PC-3 (cell line): ENCODE measurements at regions of chr5 and their contacts with region 1.

Region 1: DNA sequence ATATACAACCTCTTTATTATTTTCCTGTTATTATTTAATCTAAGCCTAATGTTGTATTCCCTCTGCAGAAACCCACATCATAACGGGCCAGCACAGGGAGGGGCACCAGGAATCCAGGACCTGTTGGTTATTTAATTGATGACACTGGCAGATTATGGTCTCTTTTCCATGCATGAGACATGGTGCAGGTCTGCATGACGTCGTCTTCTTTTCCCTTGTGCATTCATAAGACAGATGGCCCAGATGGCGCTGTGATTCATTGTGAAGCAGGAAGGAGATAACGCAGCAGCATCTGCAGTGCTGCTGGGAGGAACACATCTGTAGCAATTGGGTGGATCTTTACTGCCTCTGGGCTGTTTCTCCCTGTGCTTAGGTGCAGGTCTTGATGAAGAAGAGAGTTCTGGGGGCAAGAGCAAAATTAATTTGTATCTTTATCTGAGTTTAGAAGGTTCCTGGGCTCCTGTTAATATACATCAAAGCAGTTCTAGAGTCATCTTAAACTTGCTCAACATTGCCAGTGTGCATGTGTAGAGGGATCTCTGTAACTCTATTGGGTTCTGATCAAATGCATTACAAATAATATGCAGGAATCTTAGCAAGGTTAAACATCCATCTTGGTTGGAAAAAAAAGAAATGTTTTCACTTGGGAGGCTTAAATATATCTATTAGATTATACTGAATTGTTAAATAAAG is 176.1 kb downstream of the PCSK1 start:
- DNase-seq: peak; percentile 41
- ATAC-seq: no peak
- H3K4me3 ChIP-seq: no peak overlapping the region
- H3K27ac ChIP-seq: no peak overlapping the region
- H3K4me1 ChIP-seq: peaks cover 77% of the 10 kb centered on the region
- H3K27me3 ChIP-seq: no peaks in the 10 kb centered on the region
- CTCF ChIP-seq: 0 out of 2 replicates have a peak, but pooled peaks have one; percentile 13

Region 2: GRCh38 chr5:95858661-95859326 is 398.1 kb before region 1 on chr5:
- CTCF ChIA-PET with region 1: interaction called, 3 read pairs
- POLR2A ChIA-PET with region 1: no interaction called
- intact Hi-C with region 1: loop called (anchors 5 kb)
- DNase-seq: peak; percentile 93
- ATAC-seq: peak; percentile 68
- H3K4me3 ChIP-seq: peak overlapping the region; percentile 56
- H3K27ac ChIP-seq: peak overlapping the region; percentile 99
- H3K4me1 ChIP-seq: peaks cover 49% of the 10 kb centered on the region
- H3K27me3 ChIP-seq: no peaks in the 10 kb centered on the region
- CTCF ChIP-seq: peak; percentile 91

Region 3: DNA sequence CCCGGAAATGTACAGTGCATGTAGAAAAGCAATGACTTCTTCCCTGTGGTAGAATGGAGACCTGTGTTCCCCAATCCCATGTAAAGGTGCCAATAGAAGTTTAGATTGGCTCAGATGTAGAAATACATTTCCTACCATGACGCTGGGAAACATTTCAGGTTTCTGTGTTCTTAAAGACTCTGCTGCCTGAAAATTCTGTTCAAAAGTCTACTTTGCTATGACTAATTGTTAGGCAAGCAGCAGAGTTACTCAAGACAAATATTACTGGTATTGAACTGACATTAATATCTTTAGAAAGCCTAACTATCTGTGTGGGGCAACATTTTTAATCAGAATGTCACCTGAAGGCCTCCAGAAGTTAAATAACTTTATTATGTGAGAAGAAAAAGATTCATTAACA is 219.8 kb before region 1 on chr5:
- CTCF ChIA-PET with region 1: no interaction called
- POLR2A ChIA-PET with region 1: no interaction called
- intact Hi-C with region 1: loop called (anchors 2 kb)
- DNase-seq: peak; percentile 80
- ATAC-seq: peak; percentile 60
- H3K4me3 ChIP-seq: peak overlapping the region; percentile 49; the same call in 1 of the 2 replicates
- H3K27ac ChIP-seq: peak overlapping the region; percentile 98
- H3K4me1 ChIP-seq: peaks cover 36% of the 10 kb centered on the region
- H3K27me3 ChIP-seq: no peaks in the 10 kb centered on the region
- CTCF ChIP-seq: no peak

Region 4: DNA sequence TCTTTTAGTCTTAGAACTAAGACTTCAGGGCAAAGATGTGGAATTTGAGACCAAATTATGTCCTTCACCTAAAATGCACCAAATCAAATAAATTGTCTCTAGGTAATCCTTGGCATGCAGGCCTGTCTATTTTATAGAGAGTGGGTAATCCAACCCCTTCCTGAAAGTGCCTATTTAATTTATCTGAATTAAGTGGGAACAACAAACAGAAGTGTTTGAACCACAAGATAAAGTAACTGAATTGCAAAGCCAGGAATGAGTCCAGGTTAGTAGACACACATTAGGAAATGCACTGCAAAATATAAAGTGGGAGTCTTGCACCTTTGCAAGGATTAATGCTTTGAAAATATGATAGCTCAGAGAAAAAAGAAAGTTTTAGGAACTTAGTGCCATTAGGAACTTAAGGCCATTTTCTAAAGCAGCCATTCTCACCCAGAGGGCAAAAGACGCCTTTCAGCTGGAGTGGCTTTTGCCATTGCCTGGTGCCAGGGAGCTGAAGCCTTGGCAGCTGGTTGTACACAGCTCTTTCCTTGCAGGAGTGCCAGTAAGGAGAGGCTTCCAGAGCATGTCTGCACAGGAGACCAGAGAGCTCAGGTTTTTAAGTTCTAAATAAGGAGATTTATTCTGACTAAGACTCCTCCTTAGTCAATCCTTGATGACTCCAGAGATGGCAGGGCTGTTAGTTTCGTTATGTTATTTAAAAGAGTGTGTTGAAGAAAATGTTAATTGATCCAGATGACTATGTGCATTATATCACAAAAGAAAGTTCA is 143.6 kb before region 1 on chr5:
- CTCF ChIA-PET with region 1: no interaction called
- POLR2A ChIA-PET with region 1: interaction called, 12 read pairs
- intact Hi-C with region 1: no loop called
- DNase-seq: no peak
- ATAC-seq: no peak
- H3K4me3 ChIP-seq: no peak overlapping the region
- H3K27ac ChIP-seq: no peak overlapping the region
- H3K4me1 ChIP-seq: peaks cover 14% of the 10 kb centered on the region
- H3K27me3 ChIP-seq: no peaks in the 10 kb centered on the region
- CTCF ChIP-seq: no peak

Region 5: GRCh38 chr5:96177303-96177869 is 79.5 kb before region 1 on chr5:
- CTCF ChIA-PET with region 1: no interaction called
- POLR2A ChIA-PET with region 1: interaction called, 4 read pairs
- intact Hi-C with region 1: loop called (anchors 5 kb)
- DNase-seq: peak; percentile 94
- ATAC-seq: peak; percentile 92
- H3K4me3 ChIP-seq: no peak overlapping the region
- H3K27ac ChIP-seq: peak overlapping the region; percentile 69
- H3K4me1 ChIP-seq: peaks cover 50% of the 10 kb centered on the region
- H3K27me3 ChIP-seq: no peaks in the 10 kb centered on the region
- CTCF ChIP-seq: no peak

Region 6: GRCh38 chr5:96187309-96188027 is 69.5 kb before region 1 on chr5:
- CTCF ChIA-PET with region 1: no interaction called
- POLR2A ChIA-PET with region 1: no interaction called
- intact Hi-C with region 1: no loop called
- DNase-seq: peak; percentile 83
- ATAC-seq: peak; percentile 40; the same call in 1 of the 2 replicates
- H3K4me3 ChIP-seq: no peak overlapping the region
- H3K27ac ChIP-seq: peak overlapping the region; percentile 33
- H3K4me1 ChIP-seq: peaks cover 13% of the 10 kb centered on the region
- H3K27me3 ChIP-seq: no peaks in the 10 kb centered on the region
- CTCF ChIP-seq: no peak

Region 7: GRCh38 chr5:96220610-96221390 is 36.1 kb before region 1 on chr5:
- CTCF ChIA-PET with region 1: no interaction called
- POLR2A ChIA-PET with region 1: no interaction called
- intact Hi-C with region 1: loop called (anchors 5 kb)
- DNase-seq: peak; percentile 58
- ATAC-seq: peak; percentile 61
- H3K4me3 ChIP-seq: no peak overlapping the region
- H3K27ac ChIP-seq: peak overlapping the region; percentile 66
- H3K4me1 ChIP-seq: peaks cover 29% of the 10 kb centered on the region
- H3K27me3 ChIP-seq: no peaks in the 10 kb centered on the region
- CTCF ChIP-seq: no peak

Region 8: DNA sequence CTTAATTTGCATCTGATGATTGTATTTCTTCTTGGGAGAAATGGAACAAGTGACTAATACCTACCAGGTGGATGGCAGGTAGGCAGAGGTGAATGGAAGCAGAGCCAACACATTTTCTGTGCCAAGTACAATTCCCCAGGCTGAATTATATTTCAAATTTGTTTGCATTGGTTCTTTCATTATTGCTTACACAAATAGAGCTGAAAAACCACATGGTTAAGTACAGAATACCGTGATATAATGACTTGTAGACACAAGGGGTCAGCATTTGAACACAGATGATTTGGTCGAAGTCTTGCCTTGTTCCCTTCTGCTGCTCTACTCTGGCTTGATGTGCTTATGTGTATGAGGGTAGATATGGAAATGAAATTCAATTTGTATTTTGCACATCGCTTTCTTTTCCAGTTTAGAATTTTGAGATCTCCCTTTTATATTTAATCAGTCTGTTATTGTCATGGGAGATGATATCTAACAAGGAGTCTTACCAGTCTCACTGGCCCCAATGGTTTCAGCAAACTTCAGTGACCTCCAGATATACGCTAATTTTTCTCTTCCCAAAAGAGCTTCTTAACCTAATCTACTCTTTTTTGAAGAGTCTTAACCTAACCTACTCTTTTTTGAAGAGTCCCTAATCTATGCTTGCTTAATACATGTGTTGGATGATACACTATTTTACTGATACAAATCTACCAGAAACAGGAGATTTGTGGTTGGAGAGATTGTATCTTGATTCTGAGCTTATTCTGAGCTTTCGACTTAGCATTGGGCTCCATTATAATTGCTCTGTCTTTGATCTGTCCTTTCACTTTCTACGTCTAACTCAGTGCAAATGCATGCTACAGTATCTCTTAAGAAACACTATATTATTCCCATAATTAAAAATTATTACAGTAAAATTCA is 88.0 kb after region 1 on chr5:
- CTCF ChIA-PET with region 1: no interaction called
- POLR2A ChIA-PET with region 1: no interaction called
- intact Hi-C with region 1: no loop called
- DNase-seq: peak; percentile 85
- ATAC-seq: peak; percentile 90
- H3K4me3 ChIP-seq: no peak overlapping the region
- H3K27ac ChIP-seq: peak overlapping the region; percentile 31; the same call in 1 of the 2 replicates
- H3K4me1 ChIP-seq: peaks cover 26% of the 10 kb centered on the region
- H3K27me3 ChIP-seq: no peaks in the 10 kb centered on the region
- CTCF ChIP-seq: peak; percentile 68

Region 9: GRCh38 chr5:96614110-96614691 is 357.3 kb after region 1 on chr5:
- CTCF ChIA-PET with region 1: no interaction called
- POLR2A ChIA-PET with region 1: no interaction called
- intact Hi-C with region 1: no loop called
- DNase-seq: peak; percentile 92
- ATAC-seq: peak; percentile 91
- H3K4me3 ChIP-seq: peak overlapping the region; percentile 51
- H3K27ac ChIP-seq: peak overlapping the region; percentile 83
- H3K4me1 ChIP-seq: peaks cover 18% of the 10 kb centered on the region
- H3K27me3 ChIP-seq: no peaks in the 10 kb centered on the region
- CTCF ChIP-seq: peak; percentile 70